Ascending aorta (tissue), 2 donors: ENCODE measurements at regions of chr11 and their contacts with region 1.

Region 1: DNA sequence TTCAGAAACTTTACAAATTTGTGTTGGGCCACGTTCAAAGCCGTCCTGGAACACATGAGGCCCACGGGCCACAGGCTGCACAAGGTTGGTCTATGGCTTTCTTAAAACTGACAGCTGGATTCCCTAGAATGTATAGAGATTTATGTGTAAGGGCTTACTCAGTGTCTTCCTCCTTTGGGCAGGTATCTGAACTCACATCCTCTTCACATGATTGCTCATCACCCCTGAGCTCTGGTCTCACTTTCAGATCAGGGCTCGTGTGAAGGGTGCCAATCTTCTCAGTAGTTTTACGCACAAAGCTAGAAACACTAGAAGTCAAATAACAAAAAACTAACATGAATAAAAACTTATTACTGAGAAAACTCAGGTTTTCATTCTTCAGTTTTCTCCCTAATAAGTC is 27.1 kb downstream of the HPS5 start:
- DNase-seq: no peak
- H3K4me3 ChIP-seq: no peak overlapping the region
- H3K27ac ChIP-seq: no peak overlapping the region
- H3K4me1 ChIP-seq: no peaks in the 10 kb centered on the region
- H3K27me3 ChIP-seq: no peaks in the 10 kb centered on the region
- CTCF ChIP-seq: no peak

Region 2: DNA sequence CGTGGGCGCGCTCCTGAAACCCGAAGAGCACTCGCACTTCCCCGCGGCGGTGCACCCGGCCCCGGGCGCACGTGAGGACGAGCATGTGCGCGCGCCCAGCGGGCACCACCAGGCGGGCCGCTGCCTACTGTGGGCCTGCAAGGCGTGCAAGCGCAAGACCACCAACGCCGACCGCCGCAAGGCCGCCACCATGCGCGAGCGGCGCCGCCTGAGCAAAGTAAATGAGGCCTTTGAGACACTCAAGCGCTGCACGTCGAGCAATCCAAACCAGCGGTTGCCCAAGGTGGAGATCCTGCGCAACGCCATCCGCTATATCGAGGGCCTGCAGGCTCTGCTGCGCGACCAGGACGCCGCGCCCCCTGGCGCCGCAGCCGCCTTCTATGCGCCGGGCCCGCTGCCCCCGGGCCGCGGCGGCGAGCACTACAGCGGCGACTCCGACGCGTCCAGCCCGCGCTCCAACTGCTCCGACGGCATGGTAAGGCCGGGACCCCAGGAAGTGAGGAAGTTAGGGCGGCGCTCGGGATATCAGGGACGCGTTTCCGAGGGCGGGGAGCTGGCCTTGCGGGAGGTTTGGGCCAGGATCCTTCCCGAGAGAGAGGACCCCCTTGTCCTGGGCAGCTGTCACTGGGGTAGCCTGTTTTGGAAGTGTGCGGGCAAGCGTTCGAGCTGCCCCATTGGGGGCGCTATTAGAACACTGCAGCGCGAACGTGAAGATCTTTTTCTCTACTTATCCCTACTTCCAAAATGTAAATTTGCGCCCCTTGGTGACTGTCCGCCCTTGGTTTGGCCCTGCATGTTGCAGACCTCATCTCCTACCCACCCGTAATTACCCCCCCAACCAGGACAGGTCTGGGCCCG is 574.7 kb before region 1 on chr11:
- intact Hi-C with region 1: no loop called
- DNase-seq: peak in 1 of 2 donors; percentile 49
- H3K4me3 ChIP-seq: no peak overlapping the region
- H3K27ac ChIP-seq: no peak overlapping the region
- H3K4me1 ChIP-seq: peaks cover 0 to 6% of the 10 kb centered on the region in 2 donors
- H3K27me3 ChIP-seq: peaks cover 10% of the 10 kb centered on the region
- CTCF ChIP-seq: no peak

Region 3: GRCh38 chr11:18452927-18453326 is 158.1 kb after region 1 on chr11:
- intact Hi-C with region 1: no loop called
- DNase-seq: no peak
- H3K4me3 ChIP-seq: no peak overlapping the region
- H3K27ac ChIP-seq: no peak overlapping the region
- H3K4me1 ChIP-seq: no peaks in the 10 kb centered on the region
- H3K27me3 ChIP-seq: no peaks in the 10 kb centered on the region
- CTCF ChIP-seq: no peak

Region 4: GRCh38 chr11:18501629-18502028 is 206.8 kb after region 1 on chr11:
- intact Hi-C with region 1: loop called (anchors 10 kb)
- DNase-seq: no peak
- H3K4me3 ChIP-seq: no peak overlapping the region
- H3K27ac ChIP-seq: no peak overlapping the region
- H3K4me1 ChIP-seq: no peaks in the 10 kb centered on the region
- H3K27me3 ChIP-seq: no peaks in the 10 kb centered on the region
- CTCF ChIP-seq: no peak